K562 (cell line): ENCODE measurements at regions of chr17 and their contacts with region 1.

Region 1: GRCh38 chr17:62172492-62173291 is 107.6 kb upstream of the MED13 start:
- DNase-seq: peak; percentile 64 to 90 (median 78)
- ATAC-seq: peak; percentile 82
- H3K4me3 ChIP-seq: no peak overlapping the region
- H3K27ac ChIP-seq: peak overlapping the region; percentile 94
- H3K4me1 ChIP-seq: peaks cover 20 to 40% of the 10 kb centered on the region in 2 experiments
- H3K27me3 ChIP-seq: no peaks in the 10 kb centered on the region
- CTCF ChIP-seq: no peak
- EP300 ChIP-seq: peak; percentile 96
- POLR2A ChIP-seq: no peak
- RAD21 ChIP-seq: peak in 1 of 2 experiments; percentile 23; a peak in 3 of 4 replicates

Region 2: DNA sequence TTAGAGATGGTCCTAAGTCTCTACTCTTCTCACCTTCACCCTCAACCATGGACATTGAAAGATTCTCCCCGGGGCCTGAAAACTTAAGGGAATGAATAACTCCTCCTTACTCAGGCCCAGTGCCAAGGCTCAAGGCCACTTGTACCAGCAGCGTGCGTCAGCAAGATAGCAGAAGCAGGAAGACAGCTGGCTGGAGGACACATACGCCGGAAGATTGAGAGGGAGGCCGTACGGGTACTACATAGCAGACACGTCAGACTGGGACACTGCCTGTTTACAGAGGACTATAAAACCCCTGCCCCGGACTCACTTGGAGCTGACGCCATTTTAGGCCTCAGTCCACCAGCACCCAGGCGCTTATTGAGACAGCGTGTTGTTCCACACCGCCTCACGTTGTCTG is 31.9 kb before region 1 on chr17:
- CTCF ChIA-PET with region 1: no interaction called
- POLR2A ChIA-PET with region 1: no interaction called
- in situ Hi-C with region 1: no loop called
- intact Hi-C with region 1: loop called (anchors 2 kb)
- DNase-seq: no peak
- ATAC-seq: no peak
- H3K4me3 ChIP-seq: no peak overlapping the region
- H3K27ac ChIP-seq: no peak overlapping the region
- H3K4me1 ChIP-seq: peaks cover 17 to 18% of the 10 kb centered on the region in 2 experiments; a peak in 4 of 5 replicates
- H3K27me3 ChIP-seq: no peaks in the 10 kb centered on the region
- CTCF ChIP-seq: no peak
- EP300 ChIP-seq: no peak
- POLR2A ChIP-seq: no peak
- RAD21 ChIP-seq: no peak

Region 3: DNA sequence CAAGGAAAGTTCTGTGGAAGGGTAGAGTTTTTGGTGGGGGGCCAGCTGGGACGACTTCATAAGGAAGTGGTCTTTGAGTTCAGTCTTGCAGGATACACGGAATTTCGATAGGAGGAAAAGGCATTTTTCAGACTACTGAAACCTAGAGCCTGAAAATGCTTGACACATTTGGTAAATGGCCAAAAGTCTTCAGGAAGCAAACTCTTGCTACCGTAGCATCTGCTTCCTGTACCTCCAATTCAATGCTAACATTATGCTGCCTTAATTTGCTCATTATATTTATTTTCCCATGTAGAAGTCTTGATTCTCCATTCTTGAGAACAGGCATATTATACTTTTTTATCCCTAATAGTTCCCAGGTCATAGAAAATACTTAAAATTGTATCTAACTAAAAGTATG is 21.7 kb after region 1 on chr17:
- CTCF ChIA-PET with region 1: no interaction called
- POLR2A ChIA-PET with region 1: no interaction called
- in situ Hi-C with region 1: no loop called
- intact Hi-C with region 1: no loop called
- DNase-seq: no peak
- ATAC-seq: no peak
- H3K4me3 ChIP-seq: no peak overlapping the region
- H3K27ac ChIP-seq: no peak overlapping the region
- H3K4me1 ChIP-seq: peaks cover 0 to 8% of the 10 kb centered on the region in 2 experiments; a peak in 4 of 5 replicates
- H3K27me3 ChIP-seq: no peaks in the 10 kb centered on the region
- CTCF ChIP-seq: no peak
- EP300 ChIP-seq: no peak
- POLR2A ChIP-seq: no peak
- RAD21 ChIP-seq: no peak